ENCODE measurements at regions of chr11 and their contacts with region 1.

Region 1: GRCh38 chr11:44565211-44565952 is at the start of gene CD82:
- DNase-seq: peak; percentile 100
- ATAC-seq: peak; percentile 84
- H3K4me3 Mint-ChIP-seq: peak within 1 kb of the TSS; percentile 93
- H3K27ac Mint-ChIP-seq: peak within 1 kb of the TSS; percentile 92
- H3K4me1 Mint-ChIP-seq: peaks cover 54% of the 10 kb centered on the region
- H3K27me3 Mint-ChIP-seq: no peaks in the 10 kb centered on the region
- total RNA-seq, gene CD82: 239 to 272 TPM

Region 2: GRCh38 chr11:43680521-43681400 is 884.6 kb before region 1 on chr11 and contains the start of gene HSD17B12:
- CTCF ChIA-PET with region 1: no interaction called
- POLR2A ChIA-PET with region 1: no interaction called
- intact Hi-C with region 1: loop called in 1 of 2 experiments (anchors 10 kb)
- DNase-seq: peak; percentile 100
- ATAC-seq: peak; percentile 97
- H3K4me3 Mint-ChIP-seq: peak within 1 kb of the TSS; percentile 90
- H3K27ac Mint-ChIP-seq: peak within 1 kb of the TSS; percentile 97
- H3K4me1 Mint-ChIP-seq: peaks cover 31% of the 10 kb centered on the region
- H3K27me3 Mint-ChIP-seq: peaks cover 2% of the 10 kb centered on the region
- total RNA-seq, gene HSD17B12: 57.6 to 68.9 TPM

Region 3: GRCh38 chr11:44416776-44417175 is 148.6 kb before region 1 on chr11:
- CTCF ChIA-PET with region 1: no interaction called
- POLR2A ChIA-PET with region 1: no interaction called
- intact Hi-C with region 1: no loop called
- DNase-seq: no peak
- ATAC-seq: no peak
- H3K4me3 Mint-ChIP-seq: no peak overlapping the region
- H3K27ac Mint-ChIP-seq: no peak overlapping the region
- H3K4me1 Mint-ChIP-seq: no peaks in the 10 kb centered on the region
- H3K27me3 Mint-ChIP-seq: peaks cover 14% of the 10 kb centered on the region

Region 4: DNA sequence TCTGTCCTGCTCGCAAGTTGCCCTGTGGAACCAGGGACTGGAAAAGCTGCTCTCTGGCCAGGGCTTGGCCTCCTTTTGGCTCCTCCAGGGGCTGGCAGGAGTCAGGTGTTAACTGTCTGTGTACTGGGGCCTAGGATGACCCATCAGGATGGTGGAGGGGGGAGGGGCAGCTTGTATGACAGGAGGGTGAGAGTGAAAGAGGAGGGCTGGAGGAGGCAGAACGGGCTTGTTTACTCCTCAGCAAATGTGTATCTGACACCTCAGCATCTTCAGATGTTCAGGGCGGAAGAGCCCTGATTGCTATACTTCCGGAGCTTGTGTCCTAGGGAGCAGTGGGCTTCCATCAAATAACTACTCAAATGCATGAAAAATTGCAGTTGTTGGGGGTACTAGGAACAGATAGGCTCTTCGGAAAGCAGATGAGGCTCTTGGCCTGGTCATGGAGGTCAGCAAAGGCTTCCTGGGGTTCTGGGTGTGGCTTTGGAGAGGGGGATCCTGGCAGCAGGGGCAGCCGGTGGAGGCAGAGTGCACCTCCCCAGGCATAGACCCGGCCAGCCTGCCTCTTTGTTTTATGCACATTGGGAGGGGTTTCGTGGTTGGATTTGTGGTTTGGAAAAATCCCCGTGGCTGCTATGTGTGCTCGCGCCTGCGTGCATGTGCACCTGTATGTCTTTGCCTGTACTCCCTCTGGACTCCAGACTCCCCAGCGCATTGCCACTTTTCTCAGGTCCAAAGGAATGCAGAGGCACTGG is 31.3 kb after region 1 on chr11:
- CTCF ChIA-PET with region 1: interaction called, 4 read pairs
- POLR2A ChIA-PET with region 1: interaction called, 5 read pairs
- intact Hi-C with region 1: loop called in 1 of 2 experiments (anchors 2 kb)
- DNase-seq: peak; percentile 88
- ATAC-seq: peak; percentile 76
- H3K4me3 Mint-ChIP-seq: peak overlapping the region; percentile 49
- H3K27ac Mint-ChIP-seq: peak overlapping the region; percentile 79
- H3K4me1 Mint-ChIP-seq: peaks cover 84% of the 10 kb centered on the region
- H3K27me3 Mint-ChIP-seq: no peaks in the 10 kb centered on the region

Region 5: DNA sequence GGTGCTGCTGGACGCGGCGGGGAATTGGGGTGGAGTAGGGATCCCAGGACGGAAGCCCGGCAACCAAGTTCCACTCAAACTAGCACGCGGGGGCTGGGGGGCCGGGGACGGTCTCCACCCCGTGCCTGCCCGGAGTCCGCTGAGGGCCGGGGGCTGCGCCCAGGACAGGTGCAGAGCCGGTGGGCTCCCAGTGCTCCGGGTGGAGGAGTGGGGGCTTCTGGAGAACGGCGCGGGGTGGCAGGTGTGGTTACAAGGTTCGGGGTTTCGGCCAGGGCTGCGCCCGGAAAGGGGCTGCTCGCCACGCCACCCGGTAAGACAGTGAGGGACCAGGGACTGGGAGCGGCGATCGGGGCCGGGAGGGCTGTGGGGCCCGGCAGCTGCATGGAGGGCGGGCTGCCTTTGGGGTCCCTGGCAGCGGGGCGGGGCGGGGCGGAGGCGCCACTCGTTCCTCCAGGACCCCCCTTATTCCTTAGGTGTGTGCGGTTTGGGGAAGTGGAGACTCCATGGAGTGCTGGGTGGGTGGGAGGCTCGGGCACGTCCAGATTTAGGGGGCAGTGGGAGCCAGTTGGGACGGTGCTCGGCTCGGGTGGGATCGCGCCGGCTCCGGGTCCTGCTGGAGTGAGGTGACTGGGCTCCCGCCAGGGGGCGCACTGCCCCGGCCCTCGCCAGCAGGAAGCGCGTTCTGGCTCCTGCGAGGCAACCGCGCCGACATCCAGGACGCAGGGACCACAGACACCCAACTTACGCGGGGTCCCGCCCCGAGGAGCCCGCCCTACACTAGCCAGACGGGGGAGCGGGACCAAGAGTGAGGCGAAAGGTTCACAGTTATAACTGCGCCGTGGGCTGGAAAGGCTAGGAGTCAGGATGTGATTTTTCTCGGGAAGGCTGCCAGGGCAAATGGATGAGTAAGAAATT is 162.2 kb after region 1 on chr11:
- CTCF ChIA-PET with region 1: no interaction called
- POLR2A ChIA-PET with region 1: no interaction called
- intact Hi-C with region 1: loop called in 1 of 2 experiments (anchors 10 kb)
- DNase-seq: peak; percentile 87
- ATAC-seq: peak; percentile 78
- H3K4me3 Mint-ChIP-seq: peak overlapping the region; percentile 74
- H3K27ac Mint-ChIP-seq: peak overlapping the region; percentile 73
- H3K4me1 Mint-ChIP-seq: peaks cover 39% of the 10 kb centered on the region
- H3K27me3 Mint-ChIP-seq: peaks cover 25% of the 10 kb centered on the region

Region 6: DNA sequence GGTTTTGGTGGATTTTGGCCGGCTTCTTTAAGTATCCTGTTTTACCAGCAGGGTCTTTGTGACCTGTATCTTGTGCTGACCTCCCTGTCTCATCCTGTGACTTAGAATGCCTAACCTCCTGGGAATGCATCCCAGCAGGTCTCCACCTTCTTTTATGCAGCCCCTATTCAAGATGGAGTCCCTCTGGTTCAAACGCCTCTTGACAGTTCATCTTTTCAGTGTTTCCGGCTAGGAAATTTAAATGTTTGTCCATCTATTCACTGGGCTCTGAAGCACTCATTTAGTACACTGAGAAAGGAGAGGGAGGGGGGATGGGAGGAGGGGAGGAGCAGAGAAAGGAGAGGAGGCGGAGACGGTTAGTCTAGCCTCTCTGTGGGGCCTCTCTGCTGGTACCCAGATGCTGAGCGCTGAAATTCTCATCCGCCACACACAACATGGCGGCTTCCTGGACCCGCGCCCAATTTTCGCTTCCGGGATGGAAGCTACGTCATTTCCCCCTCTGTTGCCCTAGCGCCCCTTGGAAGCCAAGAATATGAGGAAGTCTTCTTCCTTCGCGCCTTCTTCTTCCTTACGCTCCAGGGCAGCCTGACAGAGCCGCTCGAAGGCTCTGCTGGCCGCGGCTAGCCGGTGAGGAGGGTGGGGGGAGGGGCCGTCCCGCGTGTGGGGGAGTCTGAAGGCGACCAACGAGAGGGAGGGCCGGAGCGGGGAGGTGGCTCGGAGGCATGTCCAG is 789.8 kb after region 1 on chr11:
- CTCF ChIA-PET with region 1: no interaction called
- POLR2A ChIA-PET with region 1: no interaction called
- intact Hi-C with region 1: loop called in 1 of 2 experiments (anchors 10 kb)
- DNase-seq: peak; percentile 93
- ATAC-seq: peak; percentile 97
- H3K4me3 Mint-ChIP-seq: peak overlapping the region; percentile 75
- H3K27ac Mint-ChIP-seq: peak overlapping the region; percentile 72
- H3K4me1 Mint-ChIP-seq: peaks cover 21% of the 10 kb centered on the region
- H3K27me3 Mint-ChIP-seq: peaks cover 2% of the 10 kb centered on the region

Region 7: GRCh38 chr11:46121724-46122477 is 1556.5 kb after region 1 on chr11:
- CTCF ChIA-PET with region 1: no interaction called
- POLR2A ChIA-PET with region 1: no interaction called
- intact Hi-C with region 1: loop called in 1 of 2 experiments (anchors 5 kb)
- DNase-seq: peak; percentile 83
- ATAC-seq: peak; percentile 39
- H3K4me3 Mint-ChIP-seq: peak overlapping the region; percentile 81
- H3K27ac Mint-ChIP-seq: peak overlapping the region; percentile 86
- H3K4me1 Mint-ChIP-seq: peaks cover 41% of the 10 kb centered on the region
- H3K27me3 Mint-ChIP-seq: no peaks in the 10 kb centered on the region